Activated T-helper 1 cell treated with anti-CD3 and anti-CD28 coated beads, Interleukin-12 subunit alpha, Interleukin-12 subunit beta, Interleukin-2, Interleukin-4 antibody, amounts not matched to agents 30 ng/mL and 10 ng/mL and 1 ng/mL, durations not matched to agents 14 hours and 24 hours and 36 hours (primary cell): ENCODE measurements at regions of chr1 and their contacts with region 1.

Region 1: DNA sequence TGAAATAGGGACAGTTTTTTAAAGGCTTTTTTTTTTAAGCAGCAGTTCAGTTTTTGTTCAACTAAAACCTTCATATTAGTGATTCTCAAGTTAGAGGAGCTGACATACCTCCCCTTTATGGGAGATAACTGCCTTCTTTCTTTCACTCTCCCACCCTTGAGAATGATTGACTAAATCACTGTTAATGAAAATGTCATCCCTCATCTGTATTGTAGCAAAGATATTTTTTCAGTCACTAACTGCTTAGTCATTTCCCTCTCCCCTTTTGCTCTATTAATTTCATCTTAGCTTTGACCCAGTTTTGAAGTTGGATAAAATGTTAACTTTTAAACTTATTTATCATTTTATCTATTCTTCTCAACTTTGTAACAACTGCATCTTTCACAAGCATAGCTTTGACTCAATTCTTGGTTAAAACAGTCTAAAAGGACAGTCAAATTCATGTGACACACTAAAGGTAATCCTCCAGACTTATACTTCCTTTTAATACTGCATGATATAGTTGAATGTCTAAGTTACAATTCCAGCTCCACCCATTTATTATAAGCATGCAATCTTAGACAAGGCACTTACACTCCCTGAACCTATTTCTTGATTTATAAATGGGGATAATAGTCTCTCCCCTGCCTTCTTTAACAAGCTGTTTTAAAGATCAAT is 17.1 kb downstream of the CAPZA1 start:
- DNase-seq: no peak
- H3K4me3 Mint-ChIP-seq: no peak overlapping the region
- H3K27ac Mint-ChIP-seq: no peak overlapping the region
- H3K4me1 Mint-ChIP-seq: peaks cover 55% of the 10 kb centered on the region
- H3K27me3 Mint-ChIP-seq: no peaks in the 10 kb centered on the region

Region 2: GRCh38 chr1:111924786-111925185 is 711.9 kb before region 1 on chr1:
- intact Hi-C with region 1: no loop called
- DNase-seq: no peak
- H3K4me3 Mint-ChIP-seq: no peak overlapping the region
- H3K27ac Mint-ChIP-seq: no peak overlapping the region
- H3K4me1 Mint-ChIP-seq: no peaks in the 10 kb centered on the region
- H3K27me3 Mint-ChIP-seq: peaks cover 10% of the 10 kb centered on the region

Region 3: DNA sequence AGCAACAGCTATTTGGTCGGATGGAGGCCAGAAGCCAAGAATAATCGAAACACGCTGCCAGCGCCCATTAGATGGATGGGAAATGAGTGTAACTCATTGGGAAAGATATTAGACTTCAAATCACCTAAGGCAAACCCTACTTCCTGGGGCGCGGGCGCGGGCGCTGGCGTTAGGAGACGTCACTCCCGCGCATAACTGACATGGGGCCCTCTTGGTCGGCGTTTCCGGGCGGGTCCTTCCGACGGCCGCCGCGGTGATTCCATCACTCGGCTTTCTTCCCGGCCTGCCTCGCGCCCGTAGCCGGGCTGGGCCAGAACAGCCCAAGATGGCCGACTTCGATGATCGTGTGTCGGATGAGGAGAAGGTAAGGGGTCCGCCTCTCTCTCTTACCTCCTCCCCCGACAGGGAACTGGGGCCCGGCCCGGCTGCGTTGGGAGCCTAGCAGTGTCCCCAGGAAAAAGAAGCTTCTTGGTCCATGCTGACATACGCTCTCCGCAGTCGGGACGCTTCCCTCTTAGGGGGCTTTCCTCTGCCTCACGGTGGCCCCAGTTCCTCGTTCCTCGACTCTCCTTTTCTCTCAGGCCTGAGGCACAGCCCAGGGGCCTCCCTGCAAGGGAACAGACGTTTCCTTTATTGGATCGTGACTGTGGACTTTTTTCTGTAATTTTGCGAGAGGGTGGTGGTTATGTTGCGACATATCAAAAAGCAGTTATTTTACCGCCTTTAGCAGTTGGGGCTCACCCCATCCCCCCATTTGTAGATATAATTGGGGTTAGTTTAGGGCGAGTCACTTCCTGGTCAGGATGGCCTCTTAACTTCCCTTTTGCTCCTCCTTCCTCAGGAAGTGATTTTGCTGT is 17.0 kb before region 1 on chr1 and contains the start of gene CAPZA1:
- intact Hi-C with region 1: loop called (anchors 1 kb)
- DNase-seq: peak; percentile 90
- H3K4me3 Mint-ChIP-seq: peak within 1 kb of the TSS; percentile 98
- H3K27ac Mint-ChIP-seq: peak within 1 kb of the TSS; percentile 98
- H3K4me1 Mint-ChIP-seq: peaks cover 48% of the 10 kb centered on the region
- H3K27me3 Mint-ChIP-seq: no peaks in the 10 kb centered on the region
- total RNA-seq, gene CAPZA1: 239 and 242 TPM in 2 replicates

Region 4: DNA sequence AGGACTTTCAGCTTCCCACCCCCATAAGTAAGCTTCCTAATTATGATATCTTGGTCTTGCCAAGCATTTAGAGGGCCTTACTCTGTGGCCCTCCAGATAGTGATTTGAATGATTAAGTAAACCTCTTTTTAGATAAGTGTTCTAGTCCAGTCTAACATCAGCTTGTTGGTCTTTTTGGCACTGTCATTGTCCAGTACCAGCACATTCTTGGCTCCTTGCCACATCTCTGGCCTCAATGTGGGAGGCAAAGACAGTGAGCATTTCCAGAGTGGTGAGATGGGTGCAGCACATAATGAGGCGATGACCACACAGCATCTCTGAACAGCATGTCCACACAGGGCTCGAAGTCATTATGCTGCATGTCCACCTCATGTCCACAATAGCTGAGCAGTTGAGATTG is 11.0 kb before region 1 on chr1:
- intact Hi-C with region 1: loop called (anchors 1 kb)
- DNase-seq: no peak
- H3K4me3 Mint-ChIP-seq: peak overlapping the region; percentile 33
- H3K27ac Mint-ChIP-seq: peak overlapping the region; percentile 26
- H3K4me1 Mint-ChIP-seq: peaks cover 78% of the 10 kb centered on the region
- H3K27me3 Mint-ChIP-seq: no peaks in the 10 kb centered on the region

Region 5: GRCh38 chr1:112651205-112651604 is 14.5 kb after region 1 on chr1:
- intact Hi-C with region 1: loop called (anchors 2 kb)
- DNase-seq: no peak
- H3K4me3 Mint-ChIP-seq: no peak overlapping the region
- H3K27ac Mint-ChIP-seq: peak overlapping the region; percentile 13
- H3K4me1 Mint-ChIP-seq: peaks cover 15% of the 10 kb centered on the region
- H3K27me3 Mint-ChIP-seq: no peaks in the 10 kb centered on the region